Endothelial cell of umbilical vein (primary cell): ENCODE measurements at regions of chr9 and their contacts with region 1.

Region 1: DNA sequence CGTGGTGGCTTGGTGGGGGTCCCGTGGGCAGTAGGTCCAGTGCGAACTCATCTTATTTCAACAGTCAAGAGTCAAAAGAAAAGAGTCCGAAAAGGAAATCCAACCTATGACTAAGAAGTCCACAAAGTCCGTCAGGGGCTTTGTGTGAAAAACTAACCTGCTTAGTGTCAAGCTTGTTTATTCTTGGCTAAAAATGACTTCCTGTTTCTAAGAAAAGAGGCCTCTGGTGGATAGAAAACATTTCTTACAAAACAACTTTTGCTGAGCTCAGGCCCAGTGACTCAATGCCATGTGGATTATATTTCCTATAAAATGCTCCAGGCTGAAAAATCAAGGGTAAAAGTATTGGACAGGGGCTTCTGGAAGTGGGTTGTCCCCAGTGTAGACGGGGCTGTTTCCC is 105.9 kb downstream of the GADD45G start:
- DNase-seq: no peak
- H3K4me3 ChIP-seq: no peak overlapping the region
- H3K27ac ChIP-seq: no peak overlapping the region
- H3K4me1 ChIP-seq: no peaks in the 10 kb centered on the region
- H3K27me3 ChIP-seq: no peaks in the 10 kb centered on the region
- CTCF ChIP-seq: no peak
- POLR2A ChIP-seq: no peak

Region 2: DNA sequence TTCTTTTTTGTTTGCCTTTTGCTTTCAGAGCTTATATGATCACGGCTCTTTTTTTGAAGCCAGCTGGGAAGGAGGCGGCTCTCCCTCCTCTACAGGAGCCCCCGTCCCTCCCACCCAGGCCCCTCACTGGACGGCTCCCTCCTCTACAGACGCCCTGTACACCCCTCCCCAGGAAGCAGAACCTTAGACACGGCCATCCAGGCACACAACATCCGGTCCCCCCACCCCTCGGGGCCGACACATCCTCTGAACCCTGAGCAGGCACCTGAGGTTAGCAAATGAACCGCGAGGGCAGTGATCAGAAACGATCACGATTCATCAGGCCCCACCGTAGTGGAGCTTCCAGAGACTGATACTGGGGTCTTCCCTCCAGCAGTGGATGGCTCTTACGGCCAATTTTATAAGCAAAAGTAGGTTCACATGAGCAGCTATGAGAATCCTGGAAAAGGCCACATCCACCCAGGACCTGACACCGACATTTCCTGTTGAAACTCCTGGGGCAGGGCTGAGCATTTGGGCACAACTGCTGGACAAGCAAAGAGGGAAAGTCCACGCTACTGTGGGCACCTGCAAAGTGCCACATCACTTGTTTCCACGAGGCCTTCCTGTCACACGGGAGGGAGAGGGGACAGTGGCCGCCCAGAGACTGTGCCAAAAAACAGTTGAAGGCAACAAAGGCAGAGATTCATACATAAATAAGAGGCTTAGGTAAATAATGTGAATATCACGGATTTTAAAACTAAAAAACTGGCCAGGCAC is 291.6 kb before region 1 on chr9:
- CTCF ChIA-PET with region 1: no interaction called
- POLR2A ChIA-PET with region 1: no interaction called
- dilution Hi-C with region 1: no loop called
- intact Hi-C with region 1: no loop called
- DNase-seq: no peak
- H3K4me3 ChIP-seq: no peak overlapping the region
- H3K27ac ChIP-seq: no peak overlapping the region
- H3K4me1 ChIP-seq: no peaks in the 10 kb centered on the region
- H3K27me3 ChIP-seq: no peaks in the 10 kb centered on the region
- CTCF ChIP-seq: no peak
- POLR2A ChIP-seq: no peak

Region 3: GRCh38 chr9:89770531-89771174 is 60.0 kb after region 1 on chr9:
- CTCF ChIA-PET with region 1: no interaction called
- POLR2A ChIA-PET with region 1: no interaction called
- dilution Hi-C with region 1: loop called (anchors 10 kb)
- intact Hi-C with region 1: no loop called
- DNase-seq: no peak
- H3K4me3 ChIP-seq: no peak overlapping the region
- H3K27ac ChIP-seq: no peak overlapping the region
- H3K4me1 ChIP-seq: no peaks in the 10 kb centered on the region
- H3K27me3 ChIP-seq: no peaks in the 10 kb centered on the region
- CTCF ChIP-seq: no peak
- POLR2A ChIP-seq: no peak

Region 4: DNA sequence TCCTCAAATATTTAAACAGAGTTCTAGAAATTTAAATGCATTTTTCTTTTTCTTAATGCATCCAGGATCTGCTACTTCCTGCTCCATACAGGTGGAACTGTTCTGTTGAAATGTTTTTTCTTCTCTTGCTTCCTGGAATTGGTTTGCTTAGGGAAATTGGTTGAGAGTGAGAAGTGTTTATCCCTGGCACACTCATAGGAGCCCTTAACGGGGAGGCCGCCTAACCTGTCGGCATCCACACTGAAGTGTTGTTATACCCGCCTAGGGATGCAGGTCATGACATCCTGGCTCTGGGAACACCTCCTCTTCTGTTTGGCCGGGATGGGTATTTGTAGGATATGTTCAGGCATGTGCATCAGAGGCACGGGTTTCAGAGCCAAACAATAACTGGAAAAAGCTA is 133.8 kb after region 1 on chr9:
- CTCF ChIA-PET with region 1: no interaction called
- POLR2A ChIA-PET with region 1: no interaction called
- dilution Hi-C with region 1: no loop called
- intact Hi-C with region 1: no loop called
- DNase-seq: no peak
- H3K4me3 ChIP-seq: no peak overlapping the region
- H3K27ac ChIP-seq: no peak overlapping the region
- H3K4me1 ChIP-seq: no peaks in the 10 kb centered on the region
- H3K27me3 ChIP-seq: no peaks in the 10 kb centered on the region
- CTCF ChIP-seq: no peak
- POLR2A ChIP-seq: no peak